Heart left ventricle (tissue), 16 donors: ENCODE measurements at regions of chr14 and their contacts with region 1.

Region 1: DNA sequence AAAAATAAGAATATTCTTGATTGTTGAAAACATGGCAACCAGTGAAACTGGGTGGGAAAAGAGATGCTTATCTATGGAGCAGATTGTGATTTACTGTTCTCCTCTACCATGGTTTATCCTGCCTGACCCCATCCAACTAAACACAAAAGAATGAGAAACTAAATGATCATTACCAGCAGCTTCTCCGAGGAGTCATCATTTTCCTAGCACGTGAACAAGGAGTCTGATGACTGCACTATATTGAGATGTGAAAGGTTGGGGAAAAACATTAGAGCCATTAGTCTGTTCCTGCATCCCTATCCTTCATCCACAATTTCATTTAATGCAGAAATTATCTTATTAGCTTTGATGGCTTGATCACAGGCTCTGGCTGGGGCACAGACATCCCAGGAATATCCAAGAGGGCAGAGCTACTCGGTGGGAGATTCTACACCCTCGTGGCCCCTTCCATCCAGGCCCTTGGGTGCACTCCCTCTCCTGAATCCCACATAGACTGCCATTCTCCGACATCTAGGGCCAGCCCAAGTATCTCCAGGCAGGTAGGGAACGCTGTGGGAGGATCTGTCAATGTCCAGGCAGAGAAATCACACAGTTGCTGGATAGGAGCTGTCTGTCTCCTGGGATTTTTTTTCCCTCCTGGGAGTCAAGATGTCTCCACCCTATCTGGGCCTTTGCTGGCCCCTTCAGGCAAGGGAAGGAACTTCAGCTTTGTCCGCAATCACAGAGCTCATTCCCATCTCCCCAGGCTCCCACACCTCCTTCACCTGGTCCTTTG is 43.3 kb upstream of the DHRS4 start:
- DNase-seq: no peak
- ATAC-seq: peak in 3 of 4 donors; percentile 34 to 45 (median 39)
- H3K4me3 ChIP-seq: no peak overlapping the region
- H3K27ac ChIP-seq: no peak overlapping the region
- H3K4me1 ChIP-seq: peaks cover 0 to under 1% (median 0%) of the 10 kb centered on the region in 12 donors
- H3K27me3 ChIP-seq: peaks cover 0 to 6% (median 0%) of the 10 kb centered on the region in 9 donors
- CTCF ChIP-seq: peak; percentile 32 to 53 (median 44)
- POLR2A ChIP-seq: no peak

Region 2: GRCh38 chr14:23025151-23025814 is 885.0 kb before region 1 on chr14:
- intact Hi-C with region 1: no loop called
- DNase-seq: no peak
- ATAC-seq: peak in 1 of 4 donors; percentile 19
- H3K4me3 ChIP-seq: no peak overlapping the region
- H3K27ac ChIP-seq: no peak overlapping the region
- H3K4me1 ChIP-seq: peaks cover 0 to 23% (median 4%) of the 10 kb centered on the region in 12 donors
- H3K27me3 ChIP-seq: no peaks in the 10 kb centered on the region
- CTCF ChIP-seq: no peak
- POLR2A ChIP-seq: no peak

Region 3: DNA sequence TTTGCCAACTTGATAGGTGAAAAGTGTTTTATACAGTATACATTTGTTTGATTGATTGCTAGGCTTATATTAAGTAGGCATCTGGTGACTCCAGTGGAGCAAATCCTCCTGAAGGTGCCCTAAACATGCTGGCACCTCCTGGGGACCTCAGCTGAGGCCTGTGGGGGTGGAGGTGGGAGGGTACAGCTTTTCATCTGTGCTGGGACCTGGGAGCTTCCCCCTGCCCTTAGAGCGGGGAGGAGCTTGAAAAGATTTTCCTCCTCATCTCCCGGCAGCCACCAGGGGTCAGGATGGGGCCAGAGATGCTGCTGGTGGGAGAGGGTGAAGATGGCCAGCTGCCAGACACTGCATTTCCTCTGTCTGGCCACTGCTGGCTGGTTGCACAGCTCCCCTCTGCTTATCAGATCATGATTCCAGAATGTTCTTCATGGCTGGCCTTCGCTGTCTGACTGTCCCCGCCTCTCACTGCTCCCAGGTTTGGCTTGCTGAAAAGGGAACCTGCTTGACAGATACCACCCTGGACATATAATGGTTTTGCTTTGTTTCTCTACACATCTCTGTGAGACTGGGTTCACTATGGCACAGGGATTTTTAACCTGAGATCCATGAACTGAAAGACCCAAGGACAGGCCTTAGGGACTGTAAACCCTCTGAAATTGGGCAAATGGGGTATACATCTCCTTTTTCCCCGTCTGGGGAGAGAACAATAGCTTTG is 321.2 kb before region 1 on chr14:
- intact Hi-C with region 1: loop called in 1 of 10 experiments (anchors 5 kb)
- DNase-seq: peak; percentile 84 to 92 (median 87)
- ATAC-seq: peak; percentile 82 to 96 (median 91)
- H3K4me3 ChIP-seq: no peak overlapping the region
- H3K27ac ChIP-seq: no peak overlapping the region
- H3K4me1 ChIP-seq: peaks cover 0 to 7% (median 2%) of the 10 kb centered on the region in 12 donors
- H3K27me3 ChIP-seq: peaks cover 0 to 6% (median 0%) of the 10 kb centered on the region in 9 donors
- CTCF ChIP-seq: peak; percentile 58 to 76 (median 68)
- POLR2A ChIP-seq: no peak

Region 4: DNA sequence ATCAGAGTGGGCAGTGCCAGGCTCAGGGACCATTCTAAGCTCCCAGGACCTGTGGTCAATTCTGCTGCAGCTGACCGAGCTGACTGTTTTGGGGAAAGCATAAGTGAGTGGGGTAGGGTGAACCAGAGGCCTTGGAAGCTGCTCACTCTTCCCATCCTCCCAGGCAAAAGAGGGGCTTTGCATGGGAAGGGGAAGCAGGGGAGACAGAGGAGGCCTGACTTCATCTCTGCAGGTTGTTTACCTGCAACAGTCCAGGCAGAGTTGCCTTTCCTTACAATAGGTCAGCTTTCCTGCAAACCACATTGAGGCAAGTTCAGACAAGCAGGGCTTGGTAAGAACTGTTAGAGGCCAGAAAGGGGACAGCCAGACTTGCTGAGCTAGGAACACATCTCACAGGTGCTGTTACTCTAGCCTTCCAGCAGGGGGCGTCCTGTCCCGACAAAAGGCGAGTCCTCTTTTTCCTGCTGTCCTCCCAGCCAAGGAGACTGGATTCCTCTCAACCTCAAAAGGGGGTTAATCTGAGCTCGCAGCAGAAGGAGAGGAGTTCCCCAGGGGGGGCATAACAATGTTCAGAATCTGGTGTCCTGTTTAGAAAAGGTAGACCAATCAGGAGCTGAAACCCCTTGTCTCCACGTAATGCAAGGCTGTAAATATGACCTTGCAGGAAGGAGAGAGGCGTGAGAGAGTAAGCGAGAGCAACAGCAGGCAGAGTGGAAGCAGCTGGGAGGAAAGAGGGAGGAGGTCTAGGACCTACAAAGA is 278.4 kb before region 1 on chr14:
- intact Hi-C with region 1: loop called in 2 of 10 experiments (anchors 5 kb)
- DNase-seq: peak; percentile 62 to 81 (median 77)
- ATAC-seq: peak; percentile 86 to 94 (median 90)
- H3K4me3 ChIP-seq: peak overlapping the region in 6 of 12 donors; percentile 8 to 39 (median 27)
- H3K27ac ChIP-seq: peak overlapping the region in 2 of 12 donors; percentile 33 to 54
- H3K4me1 ChIP-seq: peaks cover 0 to 14% (median 6%) of the 10 kb centered on the region in 12 donors
- H3K27me3 ChIP-seq: no peaks in the 10 kb centered on the region
- CTCF ChIP-seq: peak; percentile 87 to 97 (median 94)
- POLR2A ChIP-seq: no peak

Region 5: DNA sequence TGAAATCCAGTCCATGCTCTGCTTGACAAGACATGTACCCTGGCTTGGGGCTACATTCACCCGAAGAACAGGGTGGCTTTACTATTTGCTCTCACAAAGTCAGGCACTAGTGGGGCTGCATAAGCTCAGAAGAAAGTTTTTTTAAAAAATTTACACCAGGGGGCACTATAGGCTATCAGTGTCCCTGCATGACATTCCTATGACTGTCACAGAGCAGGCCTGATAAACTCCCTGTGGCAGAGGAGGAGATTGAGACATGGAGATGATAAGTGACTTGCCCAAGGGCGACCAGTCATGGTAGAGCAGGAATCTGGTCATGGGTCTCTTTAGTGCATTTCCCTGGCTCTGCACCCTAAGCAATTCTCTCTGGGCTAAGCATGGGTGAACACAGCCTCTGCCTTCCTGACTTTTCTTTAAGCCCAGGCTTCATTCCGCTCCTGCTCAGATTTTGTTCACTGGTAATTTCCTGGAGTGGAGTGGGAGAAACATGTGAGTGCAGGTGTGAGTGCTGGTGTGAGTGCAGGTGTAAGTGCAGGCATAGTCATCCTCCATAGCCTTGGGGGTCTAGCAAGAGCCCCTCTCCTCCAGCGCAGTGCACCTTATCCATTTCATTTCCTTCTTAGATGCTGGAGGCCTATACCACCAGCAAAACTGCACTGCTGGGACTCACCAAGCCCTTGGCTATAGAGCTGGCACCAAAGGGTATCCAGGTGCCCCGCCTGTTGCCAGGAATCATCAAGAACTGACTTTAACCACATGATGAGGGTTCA is 182.5 kb before region 1 on chr14:
- intact Hi-C with region 1: loop called in 4 of 10 experiments (anchors 1 to 10 kb)
- DNase-seq: no peak
- ATAC-seq: peak; percentile 65 to 79 (median 67)
- H3K4me3 ChIP-seq: no peak overlapping the region
- H3K27ac ChIP-seq: no peak overlapping the region
- H3K4me1 ChIP-seq: no peaks in the 10 kb centered on the region
- H3K27me3 ChIP-seq: no peaks in the 10 kb centered on the region
- CTCF ChIP-seq: peak in 10 of 12 donors; percentile 10 to 37 (median 30)
- POLR2A ChIP-seq: no peak

Region 6: GRCh38 chr14:23751616-23752015 is 158.7 kb before region 1 on chr14:
- intact Hi-C with region 1: no loop called
- DNase-seq: no peak
- ATAC-seq: no peak
- H3K4me3 ChIP-seq: no peak overlapping the region
- H3K27ac ChIP-seq: no peak overlapping the region
- H3K4me1 ChIP-seq: no peaks in the 10 kb centered on the region
- H3K27me3 ChIP-seq: peaks cover 0 to 10% (median 0%) of the 10 kb centered on the region in 9 donors
- CTCF ChIP-seq: no peak
- POLR2A ChIP-seq: no peak

Region 7: DNA sequence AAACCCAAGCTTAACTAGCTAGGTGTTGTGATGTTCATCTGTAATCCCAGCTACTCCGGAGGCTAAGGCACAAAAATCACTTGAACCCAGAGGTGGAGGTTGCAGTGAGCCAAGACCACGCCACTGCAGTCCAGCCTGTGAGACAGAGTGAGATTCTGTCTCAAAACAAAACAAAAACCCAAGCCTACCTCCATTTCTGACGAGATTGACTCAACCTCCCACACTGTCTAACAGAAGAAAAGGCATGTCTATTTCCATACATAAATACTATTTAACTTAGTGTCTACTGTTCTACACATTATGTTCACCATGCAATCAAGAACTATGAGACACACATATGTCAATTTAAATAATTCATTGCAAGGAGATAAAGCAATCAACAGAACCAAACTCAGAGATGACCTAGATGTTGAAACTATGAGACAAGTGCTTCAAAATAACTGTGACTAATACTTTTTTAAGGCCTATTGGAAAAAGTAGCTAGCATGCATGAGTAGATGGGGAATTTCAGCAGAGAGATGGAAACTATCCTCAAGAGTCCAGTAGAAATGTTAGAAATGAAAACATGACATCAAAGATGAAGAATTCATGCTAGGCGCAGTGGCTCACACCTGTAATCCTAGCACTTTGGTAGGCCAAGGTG is 32.6 kb before region 1 on chr14:
- intact Hi-C with region 1: no loop called
- DNase-seq: no peak
- ATAC-seq: no peak
- H3K4me3 ChIP-seq: no peak overlapping the region
- H3K27ac ChIP-seq: no peak overlapping the region
- H3K4me1 ChIP-seq: no peaks in the 10 kb centered on the region
- H3K27me3 ChIP-seq: peaks cover 0 to 5% (median 0%) of the 10 kb centered on the region in 9 donors
- CTCF ChIP-seq: no peak
- POLR2A ChIP-seq: no peak

Region 8: GRCh38 chr14:24150993-24151741 is 240.9 kb after region 1 on chr14:
- intact Hi-C with region 1: no loop called
- DNase-seq: peak in 1 of 5 donors; percentile 57
- ATAC-seq: no peak
- H3K4me3 ChIP-seq: no peak overlapping the region
- H3K27ac ChIP-seq: no peak overlapping the region
- H3K4me1 ChIP-seq: peaks cover 6 to 20% (median 13%) of the 10 kb centered on the region in 12 donors
- H3K27me3 ChIP-seq: no peaks in the 10 kb centered on the region
- CTCF ChIP-seq: no peak
- POLR2A ChIP-seq: no peak